HCT116 (cell line): ENCODE measurements at regions of chr17 and their contacts with region 1.

Region 1: GRCh38 chr17:7252176-7253043 is at the start of gene ELP5:
- DNase-seq: peak; percentile 92
- ATAC-seq: peak; percentile 71
- H3K4me3 ChIP-seq: peak within 1 kb of the TSS; percentile 82 to 99
- H3K27ac ChIP-seq: peak within 1 kb of the TSS; percentile 84
- H3K4me1 ChIP-seq: peaks cover 13 to 25% of the 10 kb centered on the region in 2 experiments
- H3K27me3 ChIP-seq: no peaks in the 10 kb centered on the region
- CTCF ChIP-seq: 0 out of 6 replicates have a peak, but pooled peaks of 1 of the 3 experiments have one; percentile 27
- POLR2A ChIP-seq: peak; percentile 6
- RAD21 ChIP-seq: no peak
- total RNA-seq, gene ELP5: 81.7 TPM

Region 2: DNA sequence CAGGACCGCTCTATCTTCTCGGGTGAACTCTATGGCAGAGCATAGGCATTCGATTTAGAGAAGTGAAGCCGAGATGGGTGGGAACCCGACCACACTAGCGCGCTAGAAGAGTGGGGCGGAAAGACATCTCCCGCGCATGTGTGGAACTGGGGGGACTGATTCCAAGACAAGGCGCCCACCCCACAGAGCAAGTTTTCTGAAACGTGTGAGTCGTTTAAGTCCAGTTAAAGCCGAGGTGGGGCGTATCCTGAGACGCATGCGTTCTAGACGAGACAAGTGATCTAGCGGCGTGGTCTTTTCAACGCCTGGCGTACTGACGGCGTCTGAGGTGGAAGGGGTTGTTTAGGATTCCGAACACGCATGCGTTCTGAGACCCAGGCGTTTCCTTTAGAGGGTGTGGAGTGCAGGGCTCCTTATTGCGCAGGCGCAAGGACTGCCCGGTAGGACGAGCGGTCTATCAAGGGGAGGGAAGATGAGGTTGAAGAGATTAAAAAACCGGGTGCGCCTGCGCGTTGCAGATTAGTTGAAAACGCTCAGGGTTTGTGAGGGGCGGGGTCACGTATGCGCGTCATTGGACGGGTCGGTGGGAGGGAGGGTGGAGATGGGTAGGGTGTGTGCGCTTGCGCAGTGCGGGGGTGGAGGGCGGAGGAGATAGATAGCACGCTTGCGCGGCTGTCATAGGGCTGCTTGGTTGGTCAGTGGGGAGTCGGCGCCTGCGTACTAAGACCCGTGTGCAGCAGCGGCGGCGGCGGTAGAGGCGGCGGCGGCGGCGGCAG is 54.7 kb after region 1 on chr17 and contains the start of gene EIF5A:
- CTCF ChIA-PET with region 1: interaction called, 3 read pairs
- POLR2A ChIA-PET with region 1: no interaction called
- RAD21 ChIA-PET with region 1: no interaction called
- intact Hi-C with region 1: loop called (anchors 5 kb)
- DNase-seq: peak; percentile 100
- ATAC-seq: peak; percentile 80
- H3K4me3 ChIP-seq: peak within 1 kb of the TSS; percentile 90 to 99
- H3K27ac ChIP-seq: peak within 1 kb of the TSS; percentile 98
- H3K4me1 ChIP-seq: peaks cover 19 to 41% of the 10 kb centered on the region in 2 experiments
- H3K27me3 ChIP-seq: no peaks in the 10 kb centered on the region
- CTCF ChIP-seq: no peak
- POLR2A ChIP-seq: peak; percentile 79
- RAD21 ChIP-seq: no peak
- total RNA-seq, gene EIF5A: 1,139 TPM